ENCODE measurements at regions of chr9 and their contacts with region 1.

Region 1: GRCh38 chr9:17531642-17532254 is 47.1 kb upstream of the SH3GL2 start:
- DNase-seq: peak in 1 of 5 donors; percentile 18
- H3K4me3 ChIP-seq: no peak overlapping the region
- H3K27ac ChIP-seq: no peak overlapping the region
- H3K4me1 ChIP-seq: no peaks in the 10 kb centered on the region
- H3K27me3 ChIP-seq: no peaks in the 10 kb centered on the region
- CTCF ChIP-seq: peak in 2 of 3 donors; percentile 30 to 35
- EP300 ChIP-seq: no peak
- POLR2A ChIP-seq: no peak

Region 2: GRCh38 chr9:17802249-17802857 is 270.6 kb after region 1 on chr9:
- intact Hi-C with region 1: loop called in 1 of 4 experiments (anchors 10 kb)
- DNase-seq: no peak
- H3K4me3 ChIP-seq: no peak overlapping the region
- H3K27ac ChIP-seq: no peak overlapping the region
- H3K4me1 ChIP-seq: no peaks in the 10 kb centered on the region
- H3K27me3 ChIP-seq: no peaks in the 10 kb centered on the region
- CTCF ChIP-seq: peak in 1 of 3 donors; percentile 16
- EP300 ChIP-seq: no peak
- POLR2A ChIP-seq: no peak

Region 3: GRCh38 chr9:18215626-18216025 is 683.9 kb after region 1 on chr9:
- intact Hi-C with region 1: loop called in 1 of 4 experiments (anchors 10 kb)
- DNase-seq: no peak
- H3K4me3 ChIP-seq: no peak overlapping the region
- H3K27ac ChIP-seq: no peak overlapping the region
- H3K4me1 ChIP-seq: no peaks in the 10 kb centered on the region
- H3K27me3 ChIP-seq: no peaks in the 10 kb centered on the region
- CTCF ChIP-seq: no peak
- EP300 ChIP-seq: no peak
- POLR2A ChIP-seq: no peak

Measured in ovary (tissue), 10 donors.